Naive thymus-derived CD4-positive, alpha-beta T cell (primary cell): ENCODE measurements at regions of chr7 and their contacts with region 1.

Region 1: GRCh38 chr7:132580717-132581285 is 4.5 kb upstream of the PLXNA4 start:
- DNase-seq: peak; percentile 45 to 80 (median 64)
- ATAC-seq: peak; percentile 78
- H3K4me3 ChIP-seq: no peak overlapping the region
- H3K4me3 Mint-ChIP-seq: no peak overlapping the region
- H3K27ac ChIP-seq: no peak overlapping the region
- H3K27ac Mint-ChIP-seq: peak overlapping the region in 1 of 9 donors; percentile 26
- H3K4me1 ChIP-seq: no peaks in the 10 kb centered on the region
- H3K4me1 Mint-ChIP-seq: peaks cover 0 to 20% (median 8%) of the 10 kb centered on the region in 7 donors
- H3K27me3 ChIP-seq: peaks cover 1 to 5% of the 10 kb centered on the region in 2 donors
- H3K27me3 Mint-ChIP-seq: peaks cover 23 to 63% (median 32%) of the 10 kb centered on the region in 5 donors

Region 2: GRCh38 chr7:131688738-131689661 is 891.8 kb before region 1 on chr7:
- CTCF ChIA-PET with region 1: no interaction called
- POLR2A ChIA-PET with region 1: no interaction called
- intact Hi-C with region 1: loop called in 1 of 2 experiments (anchors 10 kb)
- DNase-seq: peak in 7 of 9 donors; percentile 23 to 57 (median 42)
- ATAC-seq: peak; percentile 80
- H3K4me3 ChIP-seq: no peak overlapping the region
- H3K4me3 Mint-ChIP-seq: no peak overlapping the region
- H3K27ac ChIP-seq: no peak overlapping the region
- H3K27ac Mint-ChIP-seq: peak overlapping the region in 1 of 9 donors; percentile 33
- H3K4me1 ChIP-seq: no peaks in the 10 kb centered on the region
- H3K4me1 Mint-ChIP-seq: peaks cover 0 to 7% (median 0%) of the 10 kb centered on the region in 7 donors
- H3K27me3 ChIP-seq: no peaks in the 10 kb centered on the region
- H3K27me3 Mint-ChIP-seq: peaks cover 6 to 62% (median 49%) of the 10 kb centered on the region in 5 donors

Region 3: GRCh38 chr7:132318352-132319318 is 262.2 kb before region 1 on chr7:
- CTCF ChIA-PET with region 1: interaction called, 75 read pairs
- POLR2A ChIA-PET with region 1: no interaction called
- intact Hi-C with region 1: loop called (anchors 1 kb)
- DNase-seq: peak; percentile 56 to 82 (median 75)
- ATAC-seq: peak; percentile 89
- H3K4me3 ChIP-seq: no peak overlapping the region
- H3K4me3 Mint-ChIP-seq: peak overlapping the region; percentile 6 to 71 (median 43)
- H3K27ac ChIP-seq: no peak overlapping the region
- H3K27ac Mint-ChIP-seq: no peak overlapping the region
- H3K4me1 ChIP-seq: peaks cover 0 to 8% of the 10 kb centered on the region in 2 donors
- H3K4me1 Mint-ChIP-seq: peaks cover 4 to 23% (median 15%) of the 10 kb centered on the region in 7 donors
- H3K27me3 ChIP-seq: no peaks in the 10 kb centered on the region
- H3K27me3 Mint-ChIP-seq: peaks cover 33 to 44% (median 42%) of the 10 kb centered on the region in 5 donors

Region 4: DNA sequence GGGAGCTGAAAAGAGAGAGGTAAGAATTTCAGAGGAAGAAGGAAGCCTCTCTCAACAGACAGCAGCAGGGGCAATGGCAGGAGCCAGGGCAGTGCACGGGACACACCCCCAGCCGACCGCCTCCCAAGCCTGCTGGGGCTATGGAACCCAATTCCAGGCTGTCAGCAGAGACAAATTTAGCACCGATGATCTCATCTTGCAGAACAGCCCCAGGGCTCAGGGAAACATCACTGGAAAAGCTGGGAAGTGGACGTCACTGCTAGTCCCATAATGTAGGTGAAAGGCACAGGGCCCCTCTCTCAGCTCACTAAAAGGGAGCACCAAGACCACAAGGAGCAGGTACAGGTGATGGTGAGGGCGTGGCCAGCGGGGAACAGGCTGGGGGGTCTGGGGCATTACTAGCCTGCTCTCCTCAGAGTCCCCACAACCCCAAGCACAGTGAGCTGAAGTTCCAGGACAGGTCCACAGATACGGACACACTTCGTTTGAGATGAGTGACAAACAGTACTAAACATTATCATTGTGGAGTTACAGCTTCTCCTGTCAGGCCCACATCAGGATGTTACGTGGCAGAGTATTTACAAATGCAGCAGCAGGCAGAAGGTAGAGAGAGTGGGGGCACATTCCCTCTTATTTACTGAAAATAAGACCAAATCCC is 108.2 kb before region 1 on chr7:
- CTCF ChIA-PET with region 1: interaction called, 4 read pairs
- POLR2A ChIA-PET with region 1: no interaction called
- intact Hi-C with region 1: loop called in 1 of 2 experiments (anchors 1 kb)
- DNase-seq: no peak
- ATAC-seq: no peak
- H3K4me3 ChIP-seq: no peak overlapping the region
- H3K4me3 Mint-ChIP-seq: peak overlapping the region in 2 of 10 donors; percentile 17 to 32
- H3K27ac ChIP-seq: no peak overlapping the region
- H3K27ac Mint-ChIP-seq: peak overlapping the region in 2 of 9 donors; percentile 36 to 53
- H3K4me1 ChIP-seq: peaks cover 0 to 11% of the 10 kb centered on the region in 2 donors
- H3K4me1 Mint-ChIP-seq: peaks cover 11 to 73% (median 27%) of the 10 kb centered on the region in 7 donors
- H3K27me3 ChIP-seq: no peaks in the 10 kb centered on the region
- H3K27me3 Mint-ChIP-seq: peaks cover 0 to 65% (median 0%) of the 10 kb centered on the region in 5 donors

Region 5: GRCh38 chr7:132518102-132518838 is 62.5 kb before region 1 on chr7:
- CTCF ChIA-PET with region 1: interaction called, 4 read pairs
- POLR2A ChIA-PET with region 1: no interaction called
- intact Hi-C with region 1: loop called in 1 of 2 experiments (anchors 5 kb)
- DNase-seq: peak in 2 of 9 donors; percentile 4 to 8
- ATAC-seq: peak; percentile 45
- H3K4me3 ChIP-seq: no peak overlapping the region
- H3K4me3 Mint-ChIP-seq: no peak overlapping the region
- H3K27ac ChIP-seq: no peak overlapping the region
- H3K27ac Mint-ChIP-seq: no peak overlapping the region
- H3K4me1 ChIP-seq: no peaks in the 10 kb centered on the region
- H3K4me1 Mint-ChIP-seq: peaks cover 0 to 36% (median 0%) of the 10 kb centered on the region in 7 donors
- H3K27me3 ChIP-seq: no peaks in the 10 kb centered on the region
- H3K27me3 Mint-ChIP-seq: peaks cover 0 to 9% (median 0%) of the 10 kb centered on the region in 5 donors

Region 6: DNA sequence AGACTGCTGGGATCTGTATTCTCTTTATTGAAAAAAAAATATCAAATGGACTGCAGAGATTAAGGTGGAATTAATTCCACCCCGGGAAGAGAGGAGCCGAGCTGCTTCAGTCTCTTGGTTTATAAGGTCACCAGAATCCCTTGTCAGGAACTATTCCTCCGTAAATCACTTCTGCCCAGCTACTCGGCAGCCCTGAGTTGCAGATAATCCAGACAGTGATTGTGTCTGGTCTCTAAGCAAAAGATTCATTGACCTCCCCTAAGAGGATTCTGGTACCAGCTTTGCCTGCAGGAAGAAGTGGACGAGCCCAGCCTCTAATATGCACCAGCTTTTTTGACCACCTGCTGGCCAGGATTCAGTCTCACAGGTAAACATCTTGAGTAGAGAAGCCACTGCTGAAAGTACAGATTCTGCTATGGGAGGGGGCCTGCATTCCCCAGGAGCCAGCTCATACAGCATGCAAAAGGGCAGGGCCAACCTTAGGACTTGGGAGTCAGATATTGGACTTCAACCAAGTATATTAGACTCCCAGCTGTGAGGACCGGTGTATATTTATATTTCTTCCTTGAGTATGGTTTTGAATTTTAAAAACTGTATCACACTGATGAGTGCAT is 22.5 kb after region 1 on chr7:
- CTCF ChIA-PET with region 1: no interaction called
- POLR2A ChIA-PET with region 1: no interaction called
- intact Hi-C with region 1: no loop called
- DNase-seq: no peak
- ATAC-seq: no peak
- H3K4me3 ChIP-seq: no peak overlapping the region
- H3K4me3 Mint-ChIP-seq: no peak overlapping the region
- H3K27ac ChIP-seq: no peak overlapping the region
- H3K27ac Mint-ChIP-seq: no peak overlapping the region
- H3K4me1 ChIP-seq: no peaks in the 10 kb centered on the region
- H3K4me1 Mint-ChIP-seq: peaks cover 0 to 3% (median 0%) of the 10 kb centered on the region in 7 donors
- H3K27me3 ChIP-seq: no peaks in the 10 kb centered on the region
- H3K27me3 Mint-ChIP-seq: peaks cover 0 to 22% (median 0%) of the 10 kb centered on the region in 5 donors

Region 7: DNA sequence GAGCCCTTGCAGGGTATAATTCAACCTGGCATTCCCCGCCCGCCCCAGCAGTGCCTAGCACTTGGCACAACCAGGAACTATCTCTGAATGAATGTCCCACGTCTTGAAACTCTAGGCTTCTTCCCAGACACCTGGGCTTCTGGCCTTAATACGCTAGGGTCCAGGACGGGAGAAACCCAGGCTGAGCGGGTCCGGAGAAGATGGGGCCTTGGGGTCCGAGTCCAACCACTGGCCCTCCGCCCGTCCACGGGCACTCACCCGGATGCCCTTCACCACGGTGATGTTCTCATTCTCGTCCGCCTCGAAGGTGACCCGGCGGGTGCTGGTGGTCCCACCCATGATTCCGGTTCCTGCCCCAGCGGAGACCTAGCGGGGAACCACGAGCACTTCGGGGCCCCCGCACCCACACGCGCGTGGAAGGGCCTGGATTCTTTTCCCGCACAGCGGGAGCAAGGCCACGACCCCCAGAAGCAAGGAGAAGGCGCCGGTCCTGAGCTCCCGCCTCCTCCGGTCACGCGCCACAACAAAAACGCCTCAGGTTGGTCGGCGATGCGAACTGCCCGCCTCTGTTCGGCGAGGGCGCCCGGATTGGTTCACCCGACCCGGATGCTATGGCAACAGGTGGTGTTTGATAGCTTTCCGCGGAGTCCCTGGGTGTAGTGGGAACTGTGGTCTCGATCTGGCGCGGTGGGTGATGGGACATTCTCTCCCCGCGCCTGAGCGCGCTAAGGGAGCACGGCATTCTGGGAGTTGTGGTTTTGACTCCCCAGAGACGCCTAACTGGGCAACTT is 501.0 kb after region 1 on chr7 and contains the start of gene CHCHD3:
- CTCF ChIA-PET with region 1: no interaction called
- POLR2A ChIA-PET with region 1: no interaction called
- intact Hi-C with region 1: loop called in 1 of 2 experiments (anchors 5 kb)
- DNase-seq: peak; percentile 83 to 97 (median 95)
- ATAC-seq: peak; percentile 99
- H3K4me3 ChIP-seq: peak within 1 kb of the TSS; percentile 94
- H3K4me3 Mint-ChIP-seq: peak within 1 kb of the TSS; percentile 87 to 95 (median 92)
- H3K27ac ChIP-seq: peak within 1 kb of the TSS; percentile 93
- H3K27ac Mint-ChIP-seq: peak within 1 kb of the TSS; percentile 52 to 96 (median 93)
- H3K4me1 ChIP-seq: peaks cover 14 to 17% of the 10 kb centered on the region in 2 donors
- H3K4me1 Mint-ChIP-seq: peaks cover 13 to 44% (median 34%) of the 10 kb centered on the region in 7 donors
- H3K27me3 ChIP-seq: no peaks in the 10 kb centered on the region
- H3K27me3 Mint-ChIP-seq: peaks cover 0 to 7% (median 0%) of the 10 kb centered on the region in 5 donors
- total RNA-seq, gene CHCHD3: 25.6 to 44.6 (median 31.2) TPM

Region 8: DNA sequence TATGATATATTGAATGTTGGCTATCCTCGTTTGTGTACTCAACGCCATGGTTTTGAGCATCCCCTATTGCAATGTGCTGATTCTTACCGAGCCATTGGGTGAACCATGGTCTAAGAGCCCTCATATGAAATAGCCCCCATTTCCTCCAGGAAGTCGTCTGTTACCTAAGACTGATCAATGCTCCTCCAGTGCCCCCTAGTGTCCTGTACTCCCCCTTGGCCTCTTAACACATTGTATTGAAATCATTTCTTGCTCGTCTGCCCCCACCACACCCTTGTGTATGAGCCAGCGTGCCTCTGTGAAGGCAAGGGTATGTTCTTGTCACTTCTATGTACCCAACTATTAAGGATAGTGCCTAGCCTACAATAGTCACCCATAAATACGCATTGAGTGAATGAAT is 1747.1 kb after region 1 on chr7:
- CTCF ChIA-PET with region 1: no interaction called
- POLR2A ChIA-PET with region 1: no interaction called
- intact Hi-C with region 1: loop called in 1 of 2 experiments (anchors 1 kb)
- DNase-seq: peak in 8 of 9 donors; percentile 23 to 57 (median 46)
- ATAC-seq: peak; percentile 86
- H3K4me3 ChIP-seq: no peak overlapping the region
- H3K4me3 Mint-ChIP-seq: no peak overlapping the region
- H3K27ac ChIP-seq: no peak overlapping the region
- H3K27ac Mint-ChIP-seq: peak overlapping the region in 1 of 9 donors; percentile 22
- H3K4me1 ChIP-seq: no peaks in the 10 kb centered on the region
- H3K4me1 Mint-ChIP-seq: peaks cover 0 to 8% (median 0%) of the 10 kb centered on the region in 7 donors
- H3K27me3 ChIP-seq: no peaks in the 10 kb centered on the region
- H3K27me3 Mint-ChIP-seq: peaks cover 0 to 20% (median 12%) of the 10 kb centered on the region in 5 donors